HEK293 (cell line): ENCODE measurements at regions of chr19 and their contacts with region 1.

Region 1: DNA sequence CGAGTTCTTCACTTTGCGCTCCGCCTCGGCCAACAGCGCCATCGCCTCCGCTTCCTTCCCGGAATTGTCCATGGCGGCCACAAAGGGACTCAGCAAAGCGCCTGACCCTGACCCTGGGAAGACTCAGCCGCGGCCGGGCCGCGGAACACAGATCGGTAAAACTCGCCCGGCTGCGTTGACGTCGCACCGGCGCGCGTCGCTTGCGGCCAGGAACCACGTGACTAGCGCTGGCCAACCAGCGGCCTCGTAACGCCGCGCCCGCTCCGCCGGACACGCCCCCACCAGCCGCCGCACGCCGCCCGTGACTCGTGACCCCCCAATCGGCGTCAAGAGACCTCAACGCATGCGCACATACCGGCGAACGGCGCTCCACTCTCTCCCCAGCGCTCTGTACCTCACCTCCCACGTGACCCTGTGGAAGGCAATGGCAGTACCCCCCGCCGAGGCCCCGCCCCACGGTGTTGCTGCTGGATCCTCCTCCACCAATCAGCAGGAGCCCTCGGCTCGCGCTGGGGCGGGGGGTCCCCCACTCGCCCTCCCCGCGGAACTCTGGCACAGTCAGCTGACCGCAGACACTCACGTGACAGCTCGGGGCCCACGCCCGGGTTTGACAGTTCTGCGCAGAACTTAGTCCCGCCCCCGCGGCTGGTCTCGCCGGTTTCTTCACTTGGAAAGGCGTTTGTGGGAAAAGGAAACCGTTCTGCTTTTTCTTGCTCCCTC is at the start of gene NAPA:
- H3K4me3 ChIP-seq: peak within 1 kb of the TSS; percentile 75
- H3K27ac ChIP-seq: peak within 1 kb of the TSS; percentile 73
- H3K4me1 ChIP-seq: peaks cover 17% of the 10 kb centered on the region
- CTCF ChIP-seq: no peak

Region 2: DNA sequence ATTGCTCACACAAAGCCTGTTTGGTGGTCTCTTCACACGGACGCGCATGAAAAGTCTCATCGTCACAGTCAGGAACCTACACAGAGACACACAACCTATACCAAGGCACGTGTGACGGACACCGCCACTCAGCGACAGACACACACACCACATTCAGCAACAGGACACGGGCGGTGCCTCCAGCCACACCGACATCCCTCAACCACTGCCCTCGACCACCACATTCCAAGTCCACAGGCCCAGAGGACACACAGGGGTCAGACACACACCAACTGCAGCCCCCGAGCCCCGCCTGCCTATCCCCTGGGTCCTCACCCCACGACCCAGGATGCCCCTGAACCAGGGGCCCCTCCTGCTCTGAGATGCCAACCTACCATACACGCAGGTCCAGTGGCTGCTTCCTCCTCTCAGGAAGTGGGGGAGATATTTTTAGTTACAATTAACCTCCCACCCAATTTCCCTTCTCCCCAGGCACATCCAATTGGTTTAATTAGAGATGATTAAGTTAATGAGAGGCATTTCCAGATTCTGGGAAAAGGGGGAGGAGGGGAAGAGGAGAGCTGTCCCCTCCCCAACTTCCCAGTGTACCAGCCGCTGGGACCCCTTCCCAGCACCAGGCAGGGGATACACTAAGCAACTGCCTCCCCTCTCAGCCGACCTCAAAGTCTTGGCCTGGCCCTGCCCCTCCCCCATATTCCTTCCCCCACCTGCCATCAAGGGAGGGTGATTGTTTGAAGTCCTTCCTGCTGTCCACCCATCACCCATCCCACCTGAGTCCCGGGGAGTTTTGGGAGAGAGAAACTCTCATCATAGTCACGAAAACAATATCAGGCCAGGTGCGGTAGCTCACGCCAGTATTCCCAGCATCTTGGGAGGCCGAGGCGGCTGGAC is 116.1 kb before region 1 on chr19:
- CTCF ChIA-PET with region 1: no interaction called
- POLR2A ChIA-PET with region 1: no interaction called
- H3K4me3 ChIP-seq: no peak overlapping the region
- H3K27ac ChIP-seq: no peak overlapping the region
- H3K4me1 ChIP-seq: no peaks in the 10 kb centered on the region
- CTCF ChIP-seq: no peak

Region 3: GRCh38 chr19:47483800-47484690 is 31.0 kb before region 1 on chr19 and contains the start of gene KPTN:
- CTCF ChIA-PET with region 1: interaction called, 6 read pairs
- POLR2A ChIA-PET with region 1: interaction called, 11 read pairs
- H3K4me3 ChIP-seq: peak within 1 kb of the TSS; percentile 85
- H3K27ac ChIP-seq: peak within 1 kb of the TSS; percentile 79
- H3K4me1 ChIP-seq: no peaks in the 10 kb centered on the region
- CTCF ChIP-seq: peak; percentile 99

Region 4: DNA sequence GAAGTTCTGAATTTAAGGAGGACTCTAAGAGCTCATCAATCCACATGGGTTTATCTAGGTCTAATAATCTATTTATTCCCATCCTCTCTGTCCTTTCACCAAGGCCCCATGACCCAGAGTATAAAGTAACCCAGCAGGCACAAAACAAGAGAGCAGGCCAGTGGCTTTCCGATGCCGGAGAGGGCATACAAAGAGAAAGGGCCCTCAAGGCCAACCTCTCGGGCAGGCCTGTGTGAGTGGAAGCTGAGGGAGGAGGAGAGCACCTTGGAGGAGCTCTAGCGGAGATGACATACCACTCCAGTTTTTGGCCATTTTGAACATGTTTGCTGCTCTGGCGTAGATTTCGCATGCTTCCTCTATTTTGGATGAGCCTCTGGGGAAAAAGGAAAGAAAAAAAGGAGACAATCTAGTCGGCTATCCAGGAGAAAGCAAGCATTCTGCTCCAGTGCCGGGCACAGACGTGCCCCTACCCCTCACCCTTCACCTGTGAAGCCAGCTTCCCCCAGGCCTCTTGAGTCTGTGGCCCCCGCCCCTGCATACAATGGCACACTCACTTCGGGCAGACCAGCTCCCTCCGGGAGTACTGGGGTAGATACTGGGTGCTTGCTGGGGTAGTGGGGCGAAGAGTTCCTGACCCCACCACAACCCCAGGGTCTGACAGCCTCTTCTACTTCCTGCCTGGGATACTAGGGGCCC is 11.8 kb before region 1 on chr19:
- CTCF ChIA-PET with region 1: interaction called, 14 read pairs
- POLR2A ChIA-PET with region 1: interaction called, 5 read pairs
- H3K4me3 ChIP-seq: no peak overlapping the region
- H3K27ac ChIP-seq: 0 out of 2 replicates have a peak overlapping the region, but pooled peaks have one; percentile 16
- H3K4me1 ChIP-seq: no peaks in the 10 kb centered on the region
- CTCF ChIP-seq: no peak

Region 5: GRCh38 chr19:47531640-47532387 is 16.8 kb after region 1 on chr19:
- CTCF ChIA-PET with region 1: interaction called, 19 read pairs
- POLR2A ChIA-PET with region 1: interaction called, 4 read pairs
- H3K4me3 ChIP-seq: no peak overlapping the region
- H3K27ac ChIP-seq: no peak overlapping the region
- H3K4me1 ChIP-seq: no peaks in the 10 kb centered on the region
- CTCF ChIP-seq: peak; percentile 56

Region 6: DNA sequence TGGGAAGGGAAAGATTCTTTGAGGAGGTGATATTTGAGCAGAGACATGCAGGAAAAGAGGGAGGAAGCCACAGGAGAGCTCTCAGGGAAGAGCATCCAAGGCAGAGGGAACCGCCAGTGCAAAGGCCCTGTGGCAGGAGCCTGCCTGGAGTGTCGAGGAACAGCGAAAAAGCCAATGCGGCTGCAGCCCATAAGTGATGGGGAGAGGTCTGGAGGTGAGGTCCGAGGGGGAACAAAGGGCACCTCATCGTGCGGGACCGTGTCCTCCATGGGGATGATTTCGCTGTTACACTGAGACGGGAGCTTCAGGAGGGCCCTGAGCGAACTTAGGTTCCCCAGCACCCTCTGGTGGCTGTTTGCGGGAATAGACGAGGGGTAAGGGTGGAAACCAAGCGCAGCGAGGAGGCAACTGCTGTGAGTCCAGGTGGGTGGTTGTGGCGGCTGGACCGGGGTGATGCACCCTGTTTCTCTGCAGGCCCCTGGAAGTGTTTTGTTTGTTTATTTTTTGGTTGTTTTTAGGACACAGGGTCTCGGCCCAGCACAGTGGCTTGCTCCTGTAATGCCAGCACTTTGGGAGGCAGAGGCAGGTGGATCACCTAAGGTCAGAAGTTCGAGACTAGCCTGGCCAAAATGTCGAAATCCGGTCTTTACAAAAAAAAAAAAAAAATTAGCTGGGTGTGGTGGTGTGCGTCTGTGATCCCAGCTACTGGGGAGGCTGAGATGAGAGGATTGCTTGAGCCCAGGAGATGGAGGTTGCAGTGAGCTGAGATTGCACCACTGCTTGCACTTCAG is 192.3 kb after region 1 on chr19:
- CTCF ChIA-PET with region 1: interaction called, 12 read pairs
- POLR2A ChIA-PET with region 1: interaction called, 3 read pairs
- H3K4me3 ChIP-seq: no peak overlapping the region
- H3K27ac ChIP-seq: no peak overlapping the region
- H3K4me1 ChIP-seq: no peaks in the 10 kb centered on the region
- CTCF ChIP-seq: peak; percentile 84